A549 (cell line): ENCODE measurements at regions of chr1 and their contacts with region 1.

Region 1: DNA sequence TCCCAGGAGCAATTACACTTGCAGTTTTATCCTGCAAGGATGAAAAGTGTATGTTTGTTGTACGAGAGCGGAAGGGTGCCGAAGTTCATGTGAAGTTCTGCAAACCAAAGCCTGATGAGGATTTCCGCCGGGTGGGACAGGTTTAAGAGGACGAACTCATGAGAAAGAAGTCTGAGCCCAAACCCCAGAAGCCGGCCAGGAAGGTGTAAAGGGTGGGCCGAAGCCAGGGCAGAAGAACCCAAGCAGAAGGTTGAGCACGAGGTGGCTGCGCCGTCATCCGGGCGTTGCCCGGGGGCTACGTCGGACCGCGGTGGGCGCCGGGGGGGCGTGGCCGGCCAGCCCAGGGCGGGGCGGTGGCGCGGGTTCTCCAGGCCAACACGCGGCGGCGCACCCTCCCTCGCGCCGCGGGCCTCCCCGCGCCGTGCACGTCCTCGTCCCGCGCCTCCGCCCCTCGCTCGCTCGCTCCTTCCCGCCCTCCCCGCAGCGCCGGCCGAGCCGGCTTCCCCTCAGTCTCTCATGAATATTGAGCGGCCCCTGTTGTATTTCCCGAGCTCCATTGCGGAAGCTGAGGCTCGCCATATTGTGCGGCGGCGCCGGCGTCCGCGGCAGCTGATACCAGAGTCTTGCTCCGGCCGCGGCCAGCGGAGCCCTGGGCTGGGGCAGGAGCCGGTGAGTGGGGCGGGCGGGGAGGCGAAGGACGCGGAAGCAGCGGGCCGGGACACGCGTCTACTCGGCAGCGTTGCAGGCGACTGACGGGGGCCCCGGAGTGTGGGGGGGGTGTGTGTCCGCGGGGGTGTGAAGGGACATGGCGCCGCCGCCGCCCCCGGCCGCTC is at the start of gene RNF2:
- DNase-seq: peak; percentile 57 to 75
- ATAC-seq: peak; percentile 92 to 95
- H3K4me3 ChIP-seq: peak within 1 kb of the TSS; percentile 61
- H3K27ac ChIP-seq: peak within 1 kb of the TSS; percentile 90 to 94
- H3K4me1 ChIP-seq: peaks cover 15% of the 10 kb centered on the region
- CTCF ChIP-seq: peak; percentile 25; the same call in 1 of the 3 replicates
- EP300 ChIP-seq: no peak
- POLR2A ChIP-seq: peak; percentile 34
- RAD21 ChIP-seq: no peak; a peak in 1 of 5 replicates
- polyA plus RNA-seq, gene RNF2: 38.2 and 39.0 TPM in 2 replicates

Region 2: DNA sequence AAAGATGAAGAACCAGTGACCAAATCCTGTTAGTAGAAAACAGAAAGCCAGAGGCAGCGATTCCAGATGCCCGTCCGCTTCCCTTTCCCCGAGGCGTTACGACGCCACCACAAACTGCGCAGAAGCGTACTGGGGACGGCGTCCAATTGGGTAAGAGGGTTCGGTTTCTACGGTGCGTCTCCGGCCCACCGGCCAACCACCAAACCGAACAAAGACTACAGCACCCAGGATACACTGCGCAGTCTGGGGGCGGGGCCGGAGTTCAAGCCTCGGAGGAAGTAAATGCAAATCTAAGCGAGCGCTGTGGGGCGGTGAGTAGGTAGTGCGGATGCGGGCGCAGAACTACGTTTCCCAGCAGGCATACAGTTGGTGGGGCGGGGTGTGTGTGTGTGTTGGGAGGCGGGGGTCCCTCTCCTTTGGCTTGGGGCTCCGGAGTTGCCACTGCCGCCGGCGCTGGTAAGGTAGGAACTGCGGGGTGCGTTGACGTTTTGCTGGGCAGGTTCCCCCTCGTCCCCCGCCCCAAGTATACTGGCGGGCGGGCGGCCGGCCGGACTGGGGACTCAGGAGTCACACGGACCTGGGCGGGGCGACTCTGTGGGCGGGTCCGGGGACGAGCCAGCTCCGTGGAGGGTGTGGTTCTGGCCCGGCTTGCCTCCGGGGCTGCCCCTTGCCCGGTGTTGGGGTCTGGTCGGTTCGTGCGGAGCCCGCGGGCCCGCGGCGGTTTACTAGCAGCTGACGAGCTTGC is 111.8 kb after region 1 on chr1 and contains the starts of genes SWT1 and TRMT1L:
- CTCF ChIA-PET with region 1: no interaction called
- POLR2A ChIA-PET with region 1: interaction called, 14 read pairs
- DNase-seq: peak; percentile 81 to 99
- ATAC-seq: peak; percentile 95 to 97
- H3K4me3 ChIP-seq: peak within 1 kb of the TSS; percentile 86
- H3K27ac ChIP-seq: peak within 1 kb of the TSS; percentile 92 to 95
- H3K4me1 ChIP-seq: peaks cover 26% of the 10 kb centered on the region
- CTCF ChIP-seq: no peak
- EP300 ChIP-seq: no peak
- POLR2A ChIP-seq: peak; percentile 90
- RAD21 ChIP-seq: no peak
- polyA plus RNA-seq, gene SWT1: 2.2 and 2.4 TPM in 2 replicates
- polyA plus RNA-seq, gene TRMT1L: 45.1 and 52.4 TPM in 2 replicates